ENCODE measurements at regions of chr16 and their contacts with region 1.

Region 1: GRCh38 chr16:22297114-22297878 is at the start of gene POLR3E:
- DNase-seq: peak; percentile 96
- CTCF ChIP-seq: peak; percentile 100

Region 2: GRCh38 chr16:22007509-22008214 is 289.6 kb before region 1 on chr16 and contains the start of gene MOSMO:
- in situ Hi-C with region 1: loop called (anchors 25 kb)
- DNase-seq: peak; percentile 93
- CTCF ChIP-seq: no peak

Region 3: DNA sequence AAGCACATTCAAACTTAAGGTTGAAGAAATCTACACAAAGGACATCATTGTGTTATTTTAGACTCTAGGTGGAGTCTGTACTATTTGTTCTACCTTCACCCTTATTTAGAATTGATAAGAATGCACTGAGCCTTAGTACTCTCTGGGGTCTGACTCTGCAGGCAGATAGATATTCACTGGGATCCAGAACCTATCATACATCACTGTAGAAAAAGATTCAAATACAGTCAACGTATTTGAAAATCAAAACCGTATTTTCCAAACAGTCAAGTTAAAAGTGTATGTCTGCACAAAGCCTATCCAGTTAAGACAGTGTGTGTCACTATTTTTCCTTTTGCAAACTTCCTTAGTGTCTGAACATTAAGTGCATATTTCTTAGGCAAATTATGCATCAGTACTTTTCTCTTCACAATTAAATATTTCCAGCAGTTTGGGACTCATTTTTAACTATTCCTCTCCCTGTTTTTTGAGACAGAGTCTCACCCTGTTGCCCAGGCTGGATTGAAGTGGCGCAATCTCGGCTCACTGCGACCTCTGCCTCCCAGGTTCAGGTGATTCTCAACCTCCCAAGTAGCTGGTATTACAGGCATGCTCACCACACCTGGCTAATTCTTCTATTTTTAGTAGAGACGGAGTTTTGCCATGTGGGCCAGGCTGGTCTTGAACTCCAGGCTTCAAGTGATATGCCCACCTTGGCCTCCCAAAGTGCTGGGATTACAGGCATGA is 267.0 kb before region 1 on chr16:
- in situ Hi-C with region 1: no loop called
- DNase-seq: no peak
- CTCF ChIP-seq: no peak

Region 4: GRCh38 chr16:22203091-22203490 is 94.2 kb before region 1 on chr16:
- in situ Hi-C with region 1: loop called (anchors 5 kb)
- DNase-seq: no peak
- CTCF ChIP-seq: no peak

Region 5: DNA sequence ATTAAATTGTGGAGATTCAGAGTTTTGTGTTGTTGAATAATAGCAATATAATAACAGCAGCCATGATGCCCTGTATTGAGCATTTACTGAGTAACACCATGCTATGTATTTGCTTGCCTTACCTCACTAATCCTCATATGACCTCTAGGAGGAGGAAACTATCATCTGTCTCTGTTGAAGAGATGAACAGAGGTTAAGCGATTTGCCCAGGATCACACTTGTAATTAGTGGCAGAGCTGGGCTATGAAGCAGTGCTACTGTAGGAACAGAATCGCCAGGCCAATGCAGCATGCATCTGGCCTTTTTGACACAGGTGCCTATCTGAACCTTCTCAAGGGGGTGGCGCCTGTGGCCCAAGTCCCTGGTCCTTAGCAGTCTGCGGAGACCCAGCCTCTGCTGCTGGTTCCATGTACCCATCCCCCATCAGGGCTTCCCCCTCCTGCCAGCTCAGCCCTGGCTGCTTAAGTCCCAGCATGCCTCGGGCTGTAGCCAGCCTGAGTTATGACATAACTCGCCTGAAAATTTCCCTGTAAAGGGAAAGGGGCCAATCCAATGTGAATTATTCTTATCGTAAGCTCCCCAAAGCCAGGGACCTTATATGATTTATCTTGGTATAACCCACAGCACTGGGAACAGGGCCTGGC is 466.3 kb after region 1 on chr16:
- in situ Hi-C with region 1: no loop called
- DNase-seq: no peak
- CTCF ChIP-seq: no peak